HAP-1 (cell line): ENCODE measurements at regions of chr2 and their contacts with region 1.

Region 1: GRCh38 chr2:72770879-72771461 is 54.9 kb downstream of the EXOC6B start:
- DNase-seq: peak; percentile 58 to 75
- H3K4me3 ChIP-seq: no peak overlapping the region
- H3K4me1 ChIP-seq: peaks cover 6% of the 10 kb centered on the region; the same call in 1 of the 2 replicates
- H3K27me3 ChIP-seq: no peaks in the 10 kb centered on the region

Region 2: GRCh38 chr2:72862239-72862988 is 91.4 kb after region 1 on chr2:
- in situ Hi-C with region 1: loop called (anchors 5 kb)
- DNase-seq: peak; percentile 80 to 93
- H3K4me3 ChIP-seq: peak overlapping the region; percentile 19
- H3K4me1 ChIP-seq: peaks cover 7% of the 10 kb centered on the region
- H3K27me3 ChIP-seq: peaks cover 24% of the 10 kb centered on the region

Region 3: DNA sequence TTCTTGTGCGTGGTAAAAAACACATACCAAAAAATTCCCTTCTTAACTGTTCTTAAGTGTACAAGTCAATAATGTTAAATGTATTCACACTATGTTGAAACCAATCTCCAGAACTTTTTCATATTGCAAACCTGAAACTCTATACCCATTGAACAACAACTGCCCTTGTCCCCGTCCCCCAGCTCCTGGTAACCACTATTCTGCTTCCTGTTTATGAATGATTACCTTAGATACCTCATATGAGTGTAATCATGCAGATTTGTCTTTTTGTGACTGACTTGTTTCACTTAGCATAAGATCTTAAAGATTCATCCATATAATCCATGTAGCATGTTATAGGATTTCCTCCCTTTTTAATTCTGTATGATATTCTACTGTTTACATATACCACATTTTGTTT is 811.4 kb after region 1 on chr2:
- in situ Hi-C with region 1: no loop called
- DNase-seq: no peak
- H3K4me3 ChIP-seq: no peak overlapping the region
- H3K4me1 ChIP-seq: no peaks in the 10 kb centered on the region; the same call in 1 of the 2 replicates
- H3K27me3 ChIP-seq: no peaks in the 10 kb centered on the region